Activated CD4-positive, alpha-beta T cell treated with anti-CD3 and anti-CD28 coated beads for 36 hours (primary cell): ENCODE measurements at regions of chr15 and their contacts with region 1.

Region 1: GRCh38 chr15:101008158-101009139 is 89.3 kb downstream of the LRRK1 start:
- DNase-seq: peak; percentile 92
- ATAC-seq: peak; percentile 92
- H3K4me3 Mint-ChIP-seq: peak overlapping the region; percentile 82
- H3K27ac Mint-ChIP-seq: peak overlapping the region; percentile 75
- H3K4me1 Mint-ChIP-seq: peaks cover 19% of the 10 kb centered on the region
- H3K27me3 Mint-ChIP-seq: peaks cover 3% of the 10 kb centered on the region

Region 2: GRCh38 chr15:100627789-100628395 is 380.6 kb before region 1 on chr15:
- CTCF ChIA-PET with region 1: interaction called, 8 read pairs
- POLR2A ChIA-PET with region 1: no interaction called
- intact Hi-C with region 1: loop called (anchors 1 to 2 kb)
- DNase-seq: peak; percentile 72
- ATAC-seq: peak; percentile 84
- H3K4me3 Mint-ChIP-seq: no peak overlapping the region
- H3K27ac Mint-ChIP-seq: no peak overlapping the region
- H3K4me1 Mint-ChIP-seq: peaks cover 12% of the 10 kb centered on the region
- H3K27me3 Mint-ChIP-seq: no peaks in the 10 kb centered on the region

Region 3: DNA sequence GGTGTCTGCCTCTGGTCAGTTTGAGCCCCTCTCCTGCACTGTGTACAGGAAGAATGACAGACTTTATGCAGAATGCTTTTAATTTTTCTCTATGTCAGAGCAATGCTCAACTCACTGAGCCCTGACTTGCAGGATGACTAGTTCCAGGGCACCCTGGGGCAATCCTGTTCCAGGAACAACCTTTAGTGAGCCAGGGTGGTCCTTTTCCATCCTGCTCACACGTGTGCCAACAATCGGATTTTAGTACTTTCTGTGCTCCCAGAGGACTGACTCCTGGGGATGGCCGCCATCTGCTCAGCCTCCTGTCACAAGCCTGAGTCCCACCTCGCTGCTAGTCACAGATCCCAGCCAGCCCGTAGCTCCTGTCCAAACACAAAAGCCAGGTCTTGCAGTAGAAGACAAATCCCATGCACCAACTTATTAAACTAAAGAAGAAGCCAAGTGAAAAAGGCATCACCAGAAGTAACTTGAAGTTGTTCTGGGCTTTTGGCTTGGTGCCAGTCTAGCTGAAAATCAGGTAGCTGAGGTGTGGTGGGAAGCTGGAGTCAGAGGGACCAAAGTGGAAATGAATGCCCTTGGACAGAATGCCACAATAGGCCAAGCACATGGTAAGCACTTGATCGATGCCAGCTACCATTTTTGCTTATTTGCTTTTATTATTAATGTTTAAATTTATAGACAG is 176.8 kb before region 1 on chr15:
- CTCF ChIA-PET with region 1: no interaction called
- POLR2A ChIA-PET with region 1: no interaction called
- intact Hi-C with region 1: no loop called
- DNase-seq: no peak
- ATAC-seq: no peak
- H3K4me3 Mint-ChIP-seq: no peak overlapping the region
- H3K27ac Mint-ChIP-seq: no peak overlapping the region
- H3K4me1 Mint-ChIP-seq: no peaks in the 10 kb centered on the region
- H3K27me3 Mint-ChIP-seq: peaks cover 27% of the 10 kb centered on the region

Region 4: GRCh38 chr15:100929641-100930042 is 78.8 kb before region 1 on chr15:
- CTCF ChIA-PET with region 1: interaction called, 11 read pairs
- POLR2A ChIA-PET with region 1: no interaction called
- intact Hi-C with region 1: no loop called
- DNase-seq: no peak
- ATAC-seq: no peak
- H3K4me3 Mint-ChIP-seq: no peak overlapping the region
- H3K27ac Mint-ChIP-seq: no peak overlapping the region
- H3K4me1 Mint-ChIP-seq: no peaks in the 10 kb centered on the region
- H3K27me3 Mint-ChIP-seq: peaks cover 10% of the 10 kb centered on the region

Region 5: DNA sequence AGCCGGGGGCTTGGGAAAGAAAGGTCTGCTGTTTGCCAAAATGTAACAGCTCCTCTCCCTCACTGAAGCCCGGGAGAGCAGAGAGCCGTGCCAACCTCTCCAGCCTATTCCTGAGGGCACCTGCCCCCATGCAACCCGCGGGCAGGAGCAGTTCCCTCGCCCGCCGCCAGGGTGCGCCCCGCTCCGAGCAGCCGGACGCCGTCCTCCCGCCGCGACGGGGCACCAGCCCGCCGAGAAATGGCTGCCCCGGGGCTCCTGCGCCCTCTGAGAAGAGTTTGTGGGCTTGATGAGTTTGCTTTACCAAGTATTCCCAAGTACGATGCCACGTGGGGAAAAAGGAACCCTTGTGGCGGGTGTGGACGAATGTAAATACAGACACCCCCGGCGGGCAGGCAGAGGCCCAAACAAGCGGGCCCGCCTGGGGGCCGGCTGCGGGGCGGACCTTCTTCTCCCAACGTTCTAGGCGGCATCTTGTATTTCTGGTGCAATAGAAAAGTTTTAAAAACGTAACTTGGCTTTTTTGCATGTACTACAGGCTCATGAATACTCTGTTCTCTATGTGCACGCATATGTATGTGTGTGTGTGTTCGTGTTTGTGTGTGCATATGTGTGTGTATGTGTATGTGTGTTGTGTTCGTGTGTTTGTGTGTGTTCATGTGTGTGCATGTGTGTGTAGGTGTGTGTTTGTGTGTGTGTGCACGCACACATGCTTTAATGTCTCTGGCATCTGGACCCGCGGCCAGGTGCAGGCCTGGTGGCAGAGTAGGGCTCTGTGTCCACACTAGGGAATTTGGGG is 80.5 kb after region 1 on chr15:
- CTCF ChIA-PET with region 1: interaction called, 11 read pairs
- POLR2A ChIA-PET with region 1: interaction called, 3 read pairs
- intact Hi-C with region 1: no loop called
- DNase-seq: peak; percentile 89
- ATAC-seq: peak; percentile 96
- H3K4me3 Mint-ChIP-seq: no peak overlapping the region
- H3K27ac Mint-ChIP-seq: no peak overlapping the region
- H3K4me1 Mint-ChIP-seq: no peaks in the 10 kb centered on the region
- H3K27me3 Mint-ChIP-seq: no peaks in the 10 kb centered on the region

Region 6: DNA sequence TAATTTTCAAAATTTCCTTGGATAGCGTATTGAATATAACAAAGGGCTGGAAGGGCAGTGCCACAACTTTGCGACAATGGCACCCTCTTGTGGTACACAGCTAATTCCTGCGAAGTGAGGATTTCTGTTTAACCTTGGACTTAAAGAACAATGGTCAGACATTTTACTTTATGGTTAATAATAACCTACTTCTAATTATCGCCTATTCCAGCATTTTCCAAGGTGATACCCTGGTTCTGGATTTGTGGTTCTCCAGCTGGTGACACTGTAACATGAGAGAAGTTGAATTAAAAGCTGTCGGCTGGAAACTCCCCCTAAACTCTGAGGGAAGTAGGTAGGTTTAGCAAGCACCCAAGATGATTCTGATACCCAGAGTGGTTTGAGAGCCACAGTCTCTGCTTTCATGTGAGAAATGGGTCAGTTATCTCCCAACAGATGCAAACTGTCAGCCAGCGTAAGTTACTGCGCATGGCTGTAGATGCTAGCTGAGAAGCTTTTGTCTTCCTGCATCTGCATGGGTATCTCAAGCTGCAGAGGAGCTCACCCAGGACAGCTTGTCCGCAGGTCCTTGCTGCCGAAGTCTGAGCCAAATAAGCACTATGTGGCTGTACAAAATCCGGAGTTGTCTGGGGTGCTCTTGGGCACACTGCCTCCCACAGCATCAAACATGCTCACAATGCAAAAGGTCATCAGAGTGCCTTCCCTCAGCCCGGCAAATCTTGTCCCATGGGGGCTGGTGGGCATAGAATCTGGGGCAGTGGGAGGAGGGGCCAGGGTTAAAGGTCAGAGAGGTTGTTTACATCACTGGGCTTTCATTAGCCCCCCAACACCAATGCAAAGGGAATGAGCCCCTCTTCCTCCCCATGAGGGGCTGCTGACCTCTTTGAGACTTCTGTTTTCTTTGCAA is 250.0 kb after region 1 on chr15:
- CTCF ChIA-PET with region 1: interaction called, 51 read pairs
- POLR2A ChIA-PET with region 1: no interaction called
- intact Hi-C with region 1: no loop called
- DNase-seq: peak; percentile 71
- ATAC-seq: no peak
- H3K4me3 Mint-ChIP-seq: no peak overlapping the region
- H3K27ac Mint-ChIP-seq: no peak overlapping the region
- H3K4me1 Mint-ChIP-seq: peaks cover 19% of the 10 kb centered on the region
- H3K27me3 Mint-ChIP-seq: peaks cover 5% of the 10 kb centered on the region